GM10248 (cell line): ENCODE measurements at regions of chr1 and their contacts with region 1.

Region 1: GRCh38 chr1:156129706-156130581 is 15.4 kb downstream of the LMNA start:
- DNase-seq: peak; percentile 77
- CTCF ChIP-seq: peak; percentile 96

Region 2: DNA sequence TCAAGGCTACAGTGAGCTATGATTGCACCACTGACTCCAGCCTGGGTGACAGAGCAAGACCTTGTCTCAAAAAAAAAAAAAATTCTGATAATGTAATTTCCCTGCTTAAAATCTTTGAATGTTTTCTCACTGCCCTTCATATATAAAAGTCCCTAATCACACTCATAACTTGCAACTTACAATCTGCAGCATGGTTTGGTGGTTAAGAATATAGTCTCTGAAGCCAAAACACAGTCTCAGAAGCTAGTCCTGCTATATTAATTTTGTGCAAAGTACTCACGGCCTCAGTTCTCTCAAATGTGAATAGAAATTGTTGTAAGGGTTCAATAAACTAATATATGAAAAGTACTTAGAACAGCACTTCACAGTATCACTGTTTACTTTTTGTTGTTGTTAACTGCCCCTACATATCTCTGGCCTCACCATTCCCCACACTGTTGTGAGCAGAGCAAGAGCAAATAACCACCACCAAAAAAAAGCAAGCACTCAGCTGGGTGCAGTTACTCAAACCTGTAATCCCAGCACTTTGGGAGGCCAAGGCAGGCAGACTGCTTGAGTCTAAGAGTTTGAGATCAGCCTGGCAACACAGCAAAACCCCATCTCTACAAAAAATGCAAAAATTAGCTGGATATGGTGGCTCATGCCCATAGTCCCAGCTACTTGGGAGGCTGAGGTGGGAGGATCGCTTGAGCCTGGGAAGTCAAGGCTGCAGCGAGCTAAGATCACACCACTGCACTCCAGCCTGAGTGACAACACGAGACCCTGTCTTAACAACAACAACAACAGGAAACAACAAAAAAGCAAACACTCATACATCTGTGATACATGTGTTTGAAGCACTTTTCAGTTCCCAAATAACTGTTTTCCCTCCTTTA is 589.7 kb before region 1 on chr1:
- CTCF ChIA-PET with region 1: no interaction called
- POLR2A ChIA-PET with region 1: interaction called, 13 read pairs
- DNase-seq: no peak
- CTCF ChIP-seq: no peak

Region 3: DNA sequence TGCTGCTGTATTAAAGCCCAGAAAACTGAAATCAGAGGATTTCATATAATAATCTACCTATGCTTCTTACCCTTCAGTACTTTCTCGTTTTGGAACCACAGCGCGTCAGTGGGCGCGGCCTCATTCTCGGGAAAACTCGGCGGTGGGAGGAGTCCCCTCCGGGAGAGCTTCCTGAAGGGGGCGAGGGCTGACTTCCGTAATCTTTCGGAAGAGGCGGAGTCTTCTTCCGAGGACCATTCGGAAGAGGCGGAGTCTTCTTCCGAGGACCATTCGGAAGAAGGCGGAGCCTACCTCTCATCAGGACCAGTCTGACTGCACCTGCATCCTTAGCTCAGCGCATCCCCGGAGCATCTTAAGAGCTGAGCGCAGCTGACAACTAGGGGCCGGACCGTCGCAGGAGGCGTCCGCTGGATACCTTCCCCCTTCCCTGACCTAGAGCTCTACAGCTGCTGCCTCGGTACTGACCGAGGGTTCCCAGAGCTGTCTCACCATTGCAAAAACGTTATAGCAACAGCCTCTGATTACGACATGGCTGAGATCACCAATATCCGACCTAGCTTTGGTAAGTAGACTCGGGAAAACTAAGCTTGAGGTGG is 270.6 kb before region 1 on chr1 and contains the start of gene SYT11:
- CTCF ChIA-PET with region 1: no interaction called
- POLR2A ChIA-PET with region 1: no interaction called
- DNase-seq: peak; percentile 96
- CTCF ChIP-seq: no peak

Region 4: DNA sequence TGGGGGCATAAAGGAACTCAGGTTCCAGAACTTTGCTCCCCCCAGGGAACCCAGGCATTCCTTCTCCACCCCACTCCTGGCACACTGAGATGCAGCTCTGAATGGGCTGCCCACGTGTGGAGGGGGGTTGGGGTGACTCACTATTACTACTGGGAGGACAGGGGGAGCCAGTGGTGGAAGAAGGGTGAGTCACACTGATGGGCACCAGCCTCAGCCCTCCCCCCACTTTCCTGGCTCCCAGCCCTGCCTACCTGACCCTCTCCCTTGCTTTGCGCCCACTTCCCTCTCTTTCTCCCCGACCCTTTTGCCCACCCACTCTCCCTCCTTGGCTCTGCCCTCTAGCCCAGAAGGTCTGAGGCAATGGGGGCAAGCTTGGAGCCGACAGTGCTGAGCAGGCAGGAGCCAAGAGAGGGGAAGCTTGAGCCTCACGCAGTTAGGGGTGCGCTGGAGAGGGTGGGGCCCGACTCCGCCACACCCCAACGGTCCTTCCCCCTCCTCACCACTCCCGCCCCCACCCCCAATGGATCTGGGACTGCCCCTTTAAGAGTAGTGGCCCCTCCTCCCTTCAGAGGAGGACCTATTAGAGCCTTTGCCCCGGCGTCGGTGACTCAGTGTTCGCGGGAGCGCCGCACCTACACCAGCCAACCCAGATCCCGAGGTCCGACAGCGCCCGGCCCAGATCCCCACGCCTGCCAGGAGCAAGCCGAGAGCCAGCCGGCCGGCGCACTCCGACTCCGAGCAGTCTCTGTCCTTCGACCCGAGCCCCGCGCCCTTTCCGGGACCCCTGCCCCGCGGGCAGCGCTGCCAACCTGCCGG is 15.6 kb before region 1 on chr1 and contains the start of gene LMNA:
- CTCF ChIA-PET with region 1: interaction called, 1,172 read pairs
- POLR2A ChIA-PET with region 1: interaction called, 23 read pairs
- DNase-seq: peak; percentile 83
- CTCF ChIP-seq: no peak

Region 5: DNA sequence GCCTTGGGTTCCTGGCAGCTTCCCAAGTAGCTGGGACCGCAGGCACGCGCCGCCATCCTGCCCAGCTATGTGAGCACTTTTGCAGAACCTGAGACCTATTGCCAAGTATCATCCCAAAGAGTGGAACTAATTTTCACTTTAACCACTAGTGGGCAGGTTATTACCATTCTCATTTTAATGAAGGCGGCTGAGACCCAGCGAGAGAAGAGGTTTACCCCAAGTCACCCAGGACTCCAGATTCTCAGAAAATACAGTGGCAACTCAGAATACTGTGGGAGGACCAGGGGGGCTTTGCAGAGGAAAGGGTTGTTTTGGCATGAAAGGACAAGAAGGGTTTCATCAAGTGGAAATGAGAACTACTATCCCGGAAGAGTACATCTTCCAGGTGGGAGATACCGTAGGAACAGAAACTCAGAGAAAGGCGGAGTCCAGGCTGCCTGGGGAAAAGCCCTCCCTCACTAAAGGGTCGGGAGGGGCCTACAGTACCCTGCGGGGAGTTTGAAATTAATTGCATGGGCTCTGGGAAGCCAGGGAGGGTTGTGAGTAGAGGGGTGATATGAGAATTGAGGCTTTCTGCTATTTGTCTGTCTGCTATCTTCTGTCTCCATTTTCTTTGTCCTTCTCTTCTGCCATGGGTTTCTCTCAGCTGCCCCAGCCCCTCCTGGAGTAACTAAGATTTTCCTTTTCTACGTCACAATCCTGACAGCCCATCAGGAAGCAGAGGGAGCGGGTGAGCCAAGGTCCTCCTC is 16.2 kb after region 1 on chr1:
- CTCF ChIA-PET with region 1: interaction called, 64 read pairs
- POLR2A ChIA-PET with region 1: interaction called, 4 read pairs
- DNase-seq: peak; percentile 81
- CTCF ChIP-seq: peak; percentile 69

Region 6: GRCh38 chr1:156193488-156194299 is 63.8 kb after region 1 on chr1 and contains the start of gene SLC25A44:
- CTCF ChIA-PET with region 1: interaction called, 10 read pairs
- POLR2A ChIA-PET with region 1: no interaction called
- DNase-seq: peak; percentile 94
- CTCF ChIP-seq: peak; percentile 32